H1 (cell line): ENCODE measurements at regions of chr1 and their contacts with region 1.

Region 1: DNA sequence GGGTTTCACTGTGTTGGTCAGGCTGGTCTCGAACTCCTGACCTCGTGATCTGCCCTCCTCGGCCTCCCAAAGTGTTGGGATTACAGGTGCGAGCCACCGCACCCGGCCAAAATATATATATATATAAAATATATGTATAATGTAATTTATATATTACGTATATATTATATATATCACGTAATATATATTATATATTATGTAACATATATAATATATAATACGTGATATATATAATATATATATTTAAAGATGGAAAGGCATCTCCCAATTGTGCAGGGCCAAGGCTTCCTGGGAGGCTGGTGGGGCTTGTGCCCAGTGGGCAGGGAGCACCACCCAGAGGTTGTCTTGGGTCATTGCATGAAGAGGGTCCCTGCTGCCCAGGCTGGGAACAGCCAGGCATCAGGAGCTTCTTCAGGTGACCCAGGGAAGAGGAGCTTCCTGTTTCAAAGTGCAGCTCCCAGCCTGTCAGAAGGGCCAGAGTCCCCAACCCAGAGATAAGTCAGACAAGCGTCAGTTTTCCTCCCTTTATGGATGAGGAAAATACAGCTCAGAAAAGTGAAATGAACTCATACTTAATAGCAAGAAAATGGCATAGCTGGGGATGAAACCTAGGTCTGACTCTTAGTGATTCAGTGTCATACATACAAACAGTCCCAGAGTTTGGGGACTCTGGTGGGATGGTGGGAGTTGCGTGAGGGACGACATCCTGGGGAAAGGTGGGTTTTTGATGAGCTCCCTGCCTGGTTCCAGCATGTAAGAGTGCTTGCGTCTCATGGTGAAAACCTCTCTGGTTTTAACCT is 12.0 kb downstream of the UBE2Q1 start:
- DNase-seq: peak; percentile 66 to 73
- H3K4me3 ChIP-seq: no peak overlapping the region
- H3K27ac ChIP-seq: no peak overlapping the region
- H3K4me1 ChIP-seq: no peaks in the 10 kb centered on the region; a peak in 1 of 7 replicates
- H3K27me3 ChIP-seq: no peaks in the 10 kb centered on the region
- CTCF ChIP-seq: peak; percentile 85 to 96 (median 90)
- EP300 ChIP-seq: no peak
- POLR2A ChIP-seq: no peak
- RAD21 ChIP-seq: peak; percentile 95 to 97

Region 2: DNA sequence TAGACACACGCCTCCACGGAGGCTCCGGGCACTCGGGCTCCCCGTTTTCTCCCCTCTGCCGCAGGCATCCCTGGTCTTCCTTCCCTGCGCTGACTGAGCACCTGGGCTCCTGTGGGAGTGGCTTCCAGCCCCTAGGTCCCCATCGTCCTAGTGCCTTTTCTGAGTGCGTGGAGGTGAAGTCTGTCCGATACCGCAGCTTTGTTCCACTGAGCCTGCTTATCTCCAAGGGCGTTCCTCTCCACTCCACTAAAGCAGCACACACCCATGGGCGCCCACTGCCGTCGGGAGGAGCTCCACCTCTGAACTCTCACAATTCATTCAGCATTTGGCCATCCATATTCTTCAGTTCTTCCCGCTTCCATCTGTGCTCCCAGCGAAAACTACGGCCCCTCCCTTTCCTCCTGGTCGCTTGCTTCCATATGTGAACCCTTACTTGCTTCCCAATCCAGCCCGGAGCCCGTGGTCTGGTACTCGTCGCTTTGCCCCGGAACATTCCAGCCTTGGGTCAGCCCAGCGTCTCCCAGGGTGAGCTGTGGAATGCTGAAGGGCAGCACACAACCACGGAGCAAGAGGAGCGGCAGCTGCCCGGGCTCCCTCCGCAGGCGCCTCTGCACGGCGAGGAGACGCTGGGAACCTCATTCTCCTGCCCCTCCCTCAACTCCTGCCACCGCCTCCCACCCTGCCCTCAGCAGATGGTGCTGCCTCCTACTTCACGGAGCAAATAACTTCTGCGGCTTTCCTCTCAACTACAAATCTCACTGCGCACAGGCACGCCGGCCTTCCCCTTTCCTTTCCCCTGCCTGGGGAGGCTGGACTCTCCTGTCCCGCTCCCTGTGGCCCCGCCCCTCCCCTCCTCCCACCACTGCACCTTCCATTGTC is 193.6 kb before region 1 on chr1:
- CTCF ChIA-PET with region 1: interaction called, 11 read pairs
- POLR2A ChIA-PET with region 1: no interaction called
- DNase-seq: peak in 1 of 2 experiments; percentile 76
- H3K4me3 ChIP-seq: peak overlapping the region; percentile 34 to 77 (median 62)
- H3K27ac ChIP-seq: no peak overlapping the region
- H3K4me1 ChIP-seq: peaks cover 0 to 13% (median 5%) of the 10 kb centered on the region in 4 experiments; a peak in 4 of 7 replicates
- H3K27me3 ChIP-seq: peaks cover 0 to 7% (median 4%) of the 10 kb centered on the region in 4 experiments; a peak in 4 of 7 replicates
- CTCF ChIP-seq: peak in 1 of 3 experiments; percentile 0; a peak in 1 of 4 replicates
- EP300 ChIP-seq: no peak
- POLR2A ChIP-seq: peak in 1 of 2 experiments; percentile 44; a peak in 1 of 3 replicates
- RAD21 ChIP-seq: no peak

Region 3: DNA sequence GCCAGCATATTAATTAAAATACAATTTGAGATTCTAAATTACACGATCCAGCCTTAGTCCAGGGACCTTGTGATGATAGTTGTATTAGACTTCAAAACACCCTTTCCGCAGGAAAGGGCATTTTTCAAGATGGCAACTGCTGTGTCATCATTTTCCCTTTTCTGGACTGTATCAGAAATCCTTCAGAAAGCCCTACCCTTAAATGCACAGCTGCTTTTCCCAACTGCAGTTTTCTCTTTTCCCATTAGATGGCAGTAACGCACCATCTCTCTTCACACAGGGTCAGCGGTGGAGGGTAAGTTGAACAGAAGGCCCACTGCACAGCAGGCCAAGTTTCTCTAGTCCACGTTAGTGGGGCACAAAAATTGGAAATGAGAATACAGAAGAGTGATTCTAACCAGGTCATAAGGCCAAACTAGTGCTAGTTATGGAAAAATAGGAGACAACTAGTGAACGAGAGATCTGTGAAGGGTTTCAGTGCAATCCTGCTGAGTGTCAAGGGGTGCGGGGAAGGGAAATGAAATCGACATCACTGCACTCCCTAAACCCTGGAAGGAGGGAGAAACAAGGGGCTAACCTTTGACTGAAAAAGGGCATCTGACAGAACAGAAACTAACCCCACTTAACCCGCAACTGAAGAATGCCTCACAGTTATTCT is 66.6 kb before region 1 on chr1:
- CTCF ChIA-PET with region 1: interaction called, 117 read pairs
- POLR2A ChIA-PET with region 1: no interaction called
- DNase-seq: peak in 1 of 2 experiments; percentile 78
- H3K4me3 ChIP-seq: no peak overlapping the region
- H3K27ac ChIP-seq: no peak overlapping the region
- H3K4me1 ChIP-seq: no peaks in the 10 kb centered on the region; a peak in 1 of 7 replicates
- H3K27me3 ChIP-seq: no peaks in the 10 kb centered on the region
- CTCF ChIP-seq: peak; percentile 35 to 89 (median 84)
- EP300 ChIP-seq: no peak
- POLR2A ChIP-seq: no peak
- RAD21 ChIP-seq: peak; percentile 96 to 97

Region 4: DNA sequence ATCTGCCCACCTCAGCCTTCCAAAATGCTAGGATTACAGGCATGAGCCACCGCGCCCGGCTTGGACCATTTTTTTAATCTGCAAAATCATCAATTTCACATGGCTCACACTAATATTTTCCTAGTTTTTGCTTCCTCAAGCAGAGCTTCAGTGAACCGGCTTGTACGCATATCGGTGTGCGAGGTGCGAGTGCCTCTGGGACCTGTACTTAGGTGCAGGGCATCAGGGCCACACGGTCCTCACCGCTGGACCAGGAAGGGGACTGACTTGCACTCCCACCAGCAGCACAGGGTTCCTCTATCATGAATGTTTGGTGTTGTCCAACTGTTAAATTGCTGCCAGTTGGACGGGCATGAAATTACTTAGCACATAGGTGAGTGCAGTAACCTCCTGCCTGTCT is 28.8 kb before region 1 on chr1:
- CTCF ChIA-PET with region 1: interaction called, 10 read pairs
- POLR2A ChIA-PET with region 1: no interaction called
- DNase-seq: no peak
- H3K4me3 ChIP-seq: no peak overlapping the region
- H3K27ac ChIP-seq: no peak overlapping the region
- H3K4me1 ChIP-seq: no peaks in the 10 kb centered on the region; a peak in 1 of 7 replicates
- H3K27me3 ChIP-seq: peaks cover 0 to 3% (median 0%) of the 10 kb centered on the region in 4 experiments; a peak in 1 of 7 replicates
- CTCF ChIP-seq: no peak
- EP300 ChIP-seq: no peak
- POLR2A ChIP-seq: no peak
- RAD21 ChIP-seq: no peak

Region 5: DNA sequence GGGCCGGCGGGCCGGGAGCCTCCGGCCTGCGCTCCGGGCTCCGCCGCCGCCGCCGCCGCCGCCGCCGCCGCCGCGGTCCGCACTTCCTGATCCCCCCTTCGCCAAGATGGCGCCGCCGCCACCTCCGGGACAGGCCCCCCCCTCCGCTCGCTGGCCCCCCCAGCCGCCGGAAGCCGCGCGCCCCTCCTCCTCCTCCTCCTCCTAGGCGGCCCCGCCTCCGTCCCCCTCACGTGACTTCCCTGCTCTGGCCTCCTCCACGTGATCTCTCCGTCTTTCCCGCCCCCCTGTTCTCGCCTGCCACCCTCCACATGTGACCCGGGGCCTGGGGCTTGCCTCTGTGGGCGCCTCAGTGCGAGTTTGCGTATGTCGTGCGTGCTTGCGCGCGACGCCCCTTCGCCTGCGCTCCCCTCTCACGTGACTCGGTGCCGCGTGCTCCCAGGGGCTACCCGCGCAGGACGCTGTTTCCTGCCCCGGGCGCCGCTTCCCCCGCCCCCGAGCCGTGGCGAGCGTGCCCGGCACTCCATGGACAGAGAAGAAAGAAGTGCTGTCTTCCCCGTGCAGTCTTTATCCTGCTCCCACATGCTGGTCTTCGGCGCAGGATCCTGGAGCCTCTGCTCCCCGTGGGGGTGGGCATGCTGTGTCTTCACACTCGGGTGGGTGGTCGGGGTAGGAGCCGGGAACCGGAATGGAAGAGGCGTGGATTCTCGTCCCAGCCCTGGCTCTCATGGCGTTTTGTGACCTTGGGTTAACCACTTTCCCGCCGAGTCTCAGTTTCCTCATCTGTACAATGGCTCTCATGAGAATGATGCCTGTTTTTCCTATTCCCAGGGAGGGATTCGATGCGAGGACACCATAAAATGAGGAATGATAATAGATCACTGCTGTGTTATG is 12.4 kb after region 1 on chr1 and contains the start of gene UBE2Q1:
- CTCF ChIA-PET with region 1: interaction called, 13 read pairs
- POLR2A ChIA-PET with region 1: no interaction called
- DNase-seq: peak; percentile 91 to 94
- H3K4me3 ChIP-seq: peak within 1 kb of the TSS; percentile 52 to 92 (median 82)
- H3K27ac ChIP-seq: peak within 1 kb of the TSS; percentile 42
- H3K4me1 ChIP-seq: peaks cover 5 to 14% (median 7%) of the 10 kb centered on the region in 4 experiments; a peak in 5 of 7 replicates
- H3K27me3 ChIP-seq: no peaks in the 10 kb centered on the region
- CTCF ChIP-seq: no peak
- EP300 ChIP-seq: no peak; a peak in 1 of 3 replicates
- POLR2A ChIP-seq: no peak; a peak in 1 of 3 replicates
- RAD21 ChIP-seq: no peak
- total RNA-seq, gene UBE2Q1: 71.7 and 95.8 TPM in 2 replicates

Region 6: DNA sequence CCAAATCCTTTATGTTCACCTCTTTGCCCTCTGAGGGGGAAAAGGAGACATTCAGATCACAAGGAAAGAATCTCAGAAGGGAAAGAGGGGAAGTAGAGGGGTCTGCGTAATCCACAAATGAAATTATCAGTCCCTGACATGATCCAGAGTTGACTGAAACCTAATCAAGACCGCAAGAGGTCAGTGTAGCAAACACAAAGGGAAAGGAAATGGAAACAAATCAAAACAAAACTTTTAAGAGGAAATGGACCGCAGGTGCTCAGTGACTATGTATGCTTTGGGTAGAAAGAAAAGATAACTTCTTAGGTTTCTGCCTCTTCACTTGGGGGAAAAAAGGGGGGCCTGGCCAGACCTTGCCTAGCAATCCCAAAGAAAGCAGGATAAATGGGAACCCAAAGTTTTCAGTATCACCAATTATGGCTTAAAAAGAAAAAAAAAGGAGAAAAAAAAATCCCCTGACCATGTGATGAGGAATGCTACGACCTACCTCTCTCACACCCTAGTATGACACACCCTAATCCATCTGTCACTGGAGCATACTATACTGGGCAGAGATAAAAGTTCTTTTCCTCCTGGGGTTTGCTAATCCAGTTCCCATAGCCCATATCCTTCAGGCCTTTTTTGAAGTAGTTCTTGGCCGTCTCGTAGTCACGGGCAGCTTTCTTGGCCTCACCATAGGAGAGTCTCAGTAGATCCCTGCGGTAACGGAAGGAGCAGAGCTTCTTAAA is 38.0 kb after region 1 on chr1:
- CTCF ChIA-PET with region 1: no interaction called
- POLR2A ChIA-PET with region 1: no interaction called
- DNase-seq: no peak
- H3K4me3 ChIP-seq: no peak overlapping the region
- H3K27ac ChIP-seq: no peak overlapping the region
- H3K4me1 ChIP-seq: no peaks in the 10 kb centered on the region
- H3K27me3 ChIP-seq: no peaks in the 10 kb centered on the region
- CTCF ChIP-seq: no peak
- EP300 ChIP-seq: no peak
- POLR2A ChIP-seq: no peak
- RAD21 ChIP-seq: no peak